Activated B cell treated with CpG ODN at 0.5 μM for 24 hours (primary cell): ENCODE measurements at regions of chr11 and their contacts with region 1.

Region 1: GRCh38 chr11:45930031-45930794 is 7.8 kb downstream of the LARGE2 start:
- DNase-seq: peak; percentile 78
- ATAC-seq: peak; percentile 82
- H3K4me3 Mint-ChIP-seq: peak overlapping the region; percentile 94
- H3K27ac Mint-ChIP-seq: peak overlapping the region; percentile 97
- H3K4me1 Mint-ChIP-seq: peaks cover 96% of the 10 kb centered on the region
- H3K27me3 Mint-ChIP-seq: no peaks in the 10 kb centered on the region
- CTCF ChIP-seq: no peak

Region 2: DNA sequence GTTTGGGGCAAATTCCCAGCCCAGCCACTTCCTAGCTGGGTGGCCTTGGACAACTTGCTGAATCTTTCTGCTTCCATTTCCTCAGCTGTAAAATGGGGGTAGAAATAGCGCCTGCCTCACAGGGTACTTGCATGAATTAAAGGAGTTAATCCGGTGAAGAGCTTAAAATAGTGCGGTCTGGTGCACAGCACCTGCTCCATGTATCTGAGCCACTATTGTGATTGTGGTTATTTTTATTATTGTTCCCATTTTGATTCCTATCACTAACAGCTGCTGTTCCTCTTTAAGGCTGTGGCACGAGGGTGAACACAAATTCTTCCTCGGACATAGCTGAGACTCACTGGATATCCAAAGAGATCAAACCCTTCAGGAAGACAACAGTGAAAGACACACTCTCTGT is 932.6 kb before region 1 on chr11:
- CTCF ChIA-PET with region 1: no interaction called
- POLR2A ChIA-PET with region 1: interaction called, 14 read pairs
- intact Hi-C with region 1: no loop called
- DNase-seq: no peak
- ATAC-seq: no peak
- H3K4me3 Mint-ChIP-seq: no peak overlapping the region
- H3K27ac Mint-ChIP-seq: no peak overlapping the region
- H3K4me1 Mint-ChIP-seq: peaks cover 2% of the 10 kb centered on the region
- H3K27me3 Mint-ChIP-seq: no peaks in the 10 kb centered on the region
- CTCF ChIP-seq: no peak

Region 3: DNA sequence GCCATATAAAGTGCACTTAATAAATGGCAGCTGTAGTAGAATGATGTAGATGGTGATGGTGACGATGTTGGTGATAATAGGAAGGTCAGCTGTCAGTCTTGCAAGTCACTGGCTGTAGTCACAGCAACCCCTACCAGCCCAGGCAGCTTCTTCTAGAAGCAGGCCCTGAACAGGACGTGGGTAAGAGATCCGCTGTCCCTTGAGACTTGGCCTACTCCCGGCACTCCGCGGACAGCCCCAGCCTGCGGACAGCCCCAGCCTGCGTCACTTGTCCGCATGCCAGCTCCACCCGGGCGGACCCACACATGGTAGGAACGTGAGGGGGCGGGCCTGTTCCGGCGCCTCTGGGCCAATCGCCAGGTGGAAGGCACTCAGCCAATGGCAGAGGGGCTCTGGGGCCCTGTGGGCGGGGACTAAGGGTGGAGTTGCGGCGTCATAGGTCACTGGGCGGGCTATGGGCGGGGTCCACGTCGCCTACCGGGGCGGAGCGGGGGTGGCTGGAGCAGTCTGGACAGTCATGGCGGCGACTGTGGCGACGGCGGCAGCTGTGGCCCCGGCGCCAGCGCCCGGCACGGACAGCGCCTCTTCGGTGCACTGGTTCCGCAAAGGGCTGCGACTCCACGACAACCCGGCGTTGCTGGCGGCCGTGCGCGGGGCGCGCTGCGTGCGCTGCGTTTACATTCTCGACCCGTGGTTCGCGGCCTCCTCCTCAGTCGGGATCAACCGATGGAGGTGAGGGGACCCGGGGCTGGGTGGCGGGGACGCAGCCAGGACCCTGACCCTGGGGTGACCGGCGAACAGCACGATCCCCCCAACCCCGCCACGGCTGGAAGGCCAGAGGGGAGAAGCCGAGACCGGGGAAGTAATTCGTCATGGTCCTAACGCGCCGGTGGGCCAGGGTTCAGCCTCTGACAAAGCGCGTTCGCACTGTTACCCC is 83.0 kb before region 1 on chr11 and contains the start of gene CRY2:
- CTCF ChIA-PET with region 1: no interaction called
- POLR2A ChIA-PET with region 1: interaction called, 29 read pairs
- intact Hi-C with region 1: loop called (anchors 1 kb)
- DNase-seq: peak; percentile 97
- ATAC-seq: peak; percentile 89
- H3K4me3 Mint-ChIP-seq: peak within 1 kb of the TSS; percentile 85
- H3K27ac Mint-ChIP-seq: peak within 1 kb of the TSS; percentile 94
- H3K4me1 Mint-ChIP-seq: peaks cover 68% of the 10 kb centered on the region
- H3K27me3 Mint-ChIP-seq: no peaks in the 10 kb centered on the region
- CTCF ChIP-seq: no peak
- total RNA-seq, gene CRY2: 47.5 and 56.8 TPM in 2 replicates

Region 4: GRCh38 chr11:45899448-45900173 is 30.6 kb before region 1 on chr11:
- CTCF ChIA-PET with region 1: no interaction called
- POLR2A ChIA-PET with region 1: interaction called, 5 read pairs
- intact Hi-C with region 1: loop called (anchors 1 kb)
- DNase-seq: peak; percentile 74
- ATAC-seq: peak; percentile 87
- H3K4me3 Mint-ChIP-seq: peak overlapping the region; percentile 76
- H3K27ac Mint-ChIP-seq: no peak overlapping the region
- H3K4me1 Mint-ChIP-seq: peaks cover 8% of the 10 kb centered on the region
- H3K27me3 Mint-ChIP-seq: peaks cover 25% of the 10 kb centered on the region
- CTCF ChIP-seq: no peak

Region 5: GRCh38 chr11:45964911-45965389 is 34.7 kb after region 1 on chr11:
- CTCF ChIA-PET with region 1: interaction called, 13 read pairs
- POLR2A ChIA-PET with region 1: interaction called, 19 read pairs
- intact Hi-C with region 1: loop called (anchors 2 kb)
- DNase-seq: peak; percentile 24
- ATAC-seq: peak; percentile 99
- H3K4me3 Mint-ChIP-seq: no peak overlapping the region
- H3K27ac Mint-ChIP-seq: no peak overlapping the region
- H3K4me1 Mint-ChIP-seq: no peaks in the 10 kb centered on the region
- H3K27me3 Mint-ChIP-seq: no peaks in the 10 kb centered on the region
- CTCF ChIP-seq: peak; percentile 23

Region 6: GRCh38 chr11:45982656-45983470 is 52.6 kb after region 1 on chr11:
- CTCF ChIA-PET with region 1: no interaction called
- POLR2A ChIA-PET with region 1: no interaction called
- intact Hi-C with region 1: no loop called
- DNase-seq: no peak
- ATAC-seq: no peak
- H3K4me3 Mint-ChIP-seq: no peak overlapping the region
- H3K27ac Mint-ChIP-seq: no peak overlapping the region
- H3K4me1 Mint-ChIP-seq: peaks cover 2% of the 10 kb centered on the region
- H3K27me3 Mint-ChIP-seq: no peaks in the 10 kb centered on the region
- CTCF ChIP-seq: no peak

Region 7: DNA sequence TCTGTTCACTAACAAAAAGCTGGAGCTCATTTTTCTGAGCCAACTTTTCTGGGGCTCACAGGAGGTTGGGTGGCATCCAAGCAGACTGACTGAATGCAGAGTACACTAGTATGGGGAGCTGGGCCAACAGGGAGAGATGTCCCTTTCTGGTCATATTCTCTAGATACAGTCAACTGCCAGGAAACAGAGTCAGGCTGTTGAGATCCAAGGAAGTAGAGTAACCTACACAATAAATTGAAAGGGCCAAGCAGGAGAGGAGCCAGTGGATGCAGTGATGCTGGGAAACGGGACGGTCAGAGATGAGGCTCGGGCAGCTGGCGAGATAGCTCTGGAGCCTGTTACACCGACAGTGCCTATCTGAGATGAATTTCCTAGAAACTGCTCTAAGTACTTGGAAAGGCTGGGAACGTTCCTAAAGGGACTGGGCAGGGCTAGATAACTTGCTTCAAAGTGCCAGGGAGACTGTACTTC is 63.4 kb after region 1 on chr11:
- CTCF ChIA-PET with region 1: no interaction called
- POLR2A ChIA-PET with region 1: no interaction called
- intact Hi-C with region 1: no loop called
- DNase-seq: no peak
- ATAC-seq: no peak
- H3K4me3 Mint-ChIP-seq: no peak overlapping the region
- H3K27ac Mint-ChIP-seq: no peak overlapping the region
- H3K4me1 Mint-ChIP-seq: peaks cover 22% of the 10 kb centered on the region
- H3K27me3 Mint-ChIP-seq: no peaks in the 10 kb centered on the region
- CTCF ChIP-seq: no peak

Region 8: DNA sequence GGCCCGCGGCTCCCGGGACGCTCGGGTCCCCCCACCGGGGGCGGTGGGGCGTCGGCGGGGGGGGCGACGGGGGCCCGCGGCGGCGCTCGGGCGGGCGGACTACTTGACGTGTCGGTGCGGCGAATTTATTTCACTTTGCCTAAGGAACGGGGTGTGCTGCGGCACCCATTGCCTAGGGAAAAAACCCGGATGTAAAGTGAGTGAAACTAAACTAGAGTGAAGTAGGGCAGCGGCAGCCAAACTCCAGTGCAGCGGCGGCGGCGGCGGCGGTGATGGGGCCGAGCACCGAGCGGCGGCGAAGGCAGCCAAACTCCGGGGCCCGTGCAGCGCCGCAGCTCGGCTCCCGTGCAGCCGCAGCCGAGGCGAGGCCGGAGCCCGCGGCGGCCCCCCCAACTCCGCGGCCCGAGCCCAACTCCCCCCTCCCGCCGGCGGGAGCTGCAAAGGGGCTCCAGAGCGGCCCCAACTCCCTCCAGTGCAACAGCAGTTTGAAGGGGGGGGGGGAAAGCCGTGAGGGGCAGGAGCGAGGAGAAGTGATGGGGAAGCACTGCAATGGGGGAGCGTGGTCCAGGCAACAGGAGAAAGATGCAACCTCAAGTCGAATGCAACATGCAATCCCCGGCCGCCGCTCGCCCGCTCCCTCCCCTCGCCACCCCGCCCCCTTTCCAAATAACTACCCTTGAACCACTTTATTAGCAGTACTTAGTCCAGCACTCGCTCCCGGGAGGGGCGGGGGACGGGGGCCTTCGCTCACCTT is 191.7 kb after region 1 on chr11:
- CTCF ChIA-PET with region 1: no interaction called
- POLR2A ChIA-PET with region 1: interaction called, 5 read pairs
- intact Hi-C with region 1: loop called (anchors 2 kb)
- DNase-seq: no peak
- ATAC-seq: peak; percentile 47
- H3K4me3 Mint-ChIP-seq: peak overlapping the region; percentile 87
- H3K27ac Mint-ChIP-seq: peak overlapping the region; percentile 91
- H3K4me1 Mint-ChIP-seq: peaks cover 30% of the 10 kb centered on the region
- H3K27me3 Mint-ChIP-seq: no peaks in the 10 kb centered on the region
- CTCF ChIP-seq: no peak

Region 9: GRCh38 chr11:47213985-47214564 is 1283.9 kb after region 1 on chr11:
- CTCF ChIA-PET with region 1: no interaction called
- POLR2A ChIA-PET with region 1: no interaction called
- intact Hi-C with region 1: loop called (anchors 1 kb)
- DNase-seq: peak; percentile 72
- ATAC-seq: peak; percentile 73
- H3K4me3 Mint-ChIP-seq: peak overlapping the region; percentile 99
- H3K27ac Mint-ChIP-seq: peak overlapping the region; percentile 100
- H3K4me1 Mint-ChIP-seq: peaks cover 35% of the 10 kb centered on the region
- H3K27me3 Mint-ChIP-seq: no peaks in the 10 kb centered on the region
- CTCF ChIP-seq: no peak